ENCODE measurements at regions of chr16 and their contacts with region 1.

Region 1: GRCh38 chr16:56988948-56989945 is at the start of gene NLRC5:
- DNase-seq: peak; percentile 89
- CTCF ChIP-seq: no peak

Region 2: DNA sequence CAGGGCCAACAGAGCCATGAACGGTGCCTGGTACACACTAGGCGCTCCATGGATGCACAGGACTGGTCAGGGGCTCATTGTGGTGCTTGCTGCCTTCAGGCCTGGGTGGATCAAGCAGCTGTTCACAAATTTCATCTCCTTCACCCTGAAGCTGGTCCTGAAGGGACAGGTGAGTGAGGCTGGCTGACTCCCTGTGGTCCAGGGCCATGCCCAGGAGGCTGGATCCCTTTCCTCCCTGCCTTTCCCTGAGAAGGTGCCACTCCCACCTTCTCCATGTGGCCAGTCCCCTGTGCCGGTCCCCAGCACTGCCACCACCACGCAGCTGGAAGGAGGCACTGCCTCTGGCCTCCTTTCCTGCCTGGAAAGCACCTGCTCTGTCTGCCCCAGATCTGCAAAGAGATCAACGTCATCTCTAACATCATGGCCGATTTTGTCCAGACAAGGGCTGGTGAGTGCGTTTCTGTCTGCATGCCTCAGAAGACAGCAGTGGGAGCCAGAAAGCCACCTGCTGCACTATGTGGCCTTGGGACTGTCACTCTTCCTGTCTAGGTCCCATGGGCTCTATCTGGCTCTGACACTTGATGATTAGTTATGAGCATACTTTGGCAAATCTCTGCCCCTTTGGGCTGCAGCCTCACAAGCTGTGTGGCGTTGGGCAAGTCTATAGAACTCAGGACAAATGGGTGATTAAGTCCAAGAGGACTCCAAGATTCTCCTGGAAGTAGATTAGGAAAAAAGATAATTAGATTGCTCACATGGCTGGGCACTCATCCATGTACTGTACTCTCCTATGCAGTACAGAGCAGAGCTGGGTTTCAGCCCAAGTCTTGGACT is 18.1 kb before region 1 on chr16:
- CTCF ChIA-PET with region 1: interaction called, 376 read pairs
- POLR2A ChIA-PET with region 1: interaction called, 3 read pairs
- DNase-seq: peak; percentile 64
- CTCF ChIP-seq: no peak

Region 3: DNA sequence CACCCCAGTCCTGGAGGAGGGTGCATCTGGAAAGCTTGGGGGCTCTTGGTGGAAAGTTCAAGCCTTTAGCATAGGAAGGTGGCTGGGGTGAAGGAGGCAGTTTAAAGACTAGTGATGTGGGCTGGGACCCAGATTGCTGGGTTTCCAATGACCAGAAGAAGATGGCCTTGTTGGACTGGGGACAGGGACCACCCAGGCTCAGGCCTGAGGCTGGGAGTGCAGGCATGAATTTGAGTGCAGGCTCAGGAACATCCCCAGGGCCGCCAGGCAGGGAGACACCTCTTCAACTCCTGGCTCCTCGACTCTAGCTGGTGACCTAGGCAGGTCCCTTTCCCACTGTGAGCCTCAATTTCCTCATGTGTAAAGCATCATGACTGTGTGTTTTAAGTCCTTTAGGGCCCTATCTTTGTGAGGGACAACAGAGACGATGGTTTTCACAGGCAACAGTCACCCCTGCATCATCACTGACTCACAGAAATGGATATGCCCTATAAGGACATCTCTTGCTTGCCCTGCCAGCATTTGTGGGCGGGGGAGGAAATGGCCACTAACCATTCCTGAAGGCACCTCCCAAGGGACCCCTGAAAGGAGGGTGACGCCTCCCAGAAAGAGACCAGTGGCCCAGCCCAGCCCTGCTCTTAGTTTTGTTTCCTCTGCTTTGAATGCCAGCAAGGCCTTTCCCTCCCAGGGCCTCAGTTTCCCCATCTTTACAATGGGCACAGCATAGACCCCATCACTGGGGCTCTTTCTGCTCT is 11.2 kb after region 1 on chr16:
- CTCF ChIA-PET with region 1: interaction called, 11 read pairs
- POLR2A ChIA-PET with region 1: interaction called, 7 read pairs
- DNase-seq: peak; percentile 56
- CTCF ChIP-seq: no peak

Region 4: DNA sequence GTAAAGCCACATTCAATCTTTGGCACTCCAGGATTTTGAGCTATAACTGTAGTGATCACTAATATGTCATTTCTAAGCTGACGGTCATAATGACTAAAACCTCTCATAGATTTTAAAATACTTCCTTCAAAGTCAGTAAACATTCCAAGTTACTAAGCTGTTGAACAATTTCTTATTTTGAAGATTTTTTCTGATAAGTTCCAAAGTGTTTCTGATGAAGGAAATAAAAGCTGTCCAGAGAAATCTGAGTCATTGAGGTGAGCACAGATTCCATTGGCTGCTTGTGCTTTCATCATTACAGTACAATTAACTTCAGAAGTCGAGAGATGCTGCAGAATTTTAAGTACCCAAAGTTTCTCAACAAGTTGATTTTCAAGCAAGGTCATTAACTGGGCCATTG is 24.0 kb after region 1 on chr16:
- CTCF ChIA-PET with region 1: interaction called, 13 read pairs
- POLR2A ChIA-PET with region 1: interaction called, 3 read pairs
- DNase-seq: no peak
- CTCF ChIP-seq: no peak

Region 5: GRCh38 chr16:57045694-57046381 is 56.6 kb after region 1 on chr16:
- CTCF ChIA-PET with region 1: interaction called, 24 read pairs
- POLR2A ChIA-PET with region 1: no interaction called
- DNase-seq: peak; percentile 81
- CTCF ChIP-seq: peak; percentile 86